ENCODE measurements at regions of chr11 and their contacts with region 1.

Region 1: DNA sequence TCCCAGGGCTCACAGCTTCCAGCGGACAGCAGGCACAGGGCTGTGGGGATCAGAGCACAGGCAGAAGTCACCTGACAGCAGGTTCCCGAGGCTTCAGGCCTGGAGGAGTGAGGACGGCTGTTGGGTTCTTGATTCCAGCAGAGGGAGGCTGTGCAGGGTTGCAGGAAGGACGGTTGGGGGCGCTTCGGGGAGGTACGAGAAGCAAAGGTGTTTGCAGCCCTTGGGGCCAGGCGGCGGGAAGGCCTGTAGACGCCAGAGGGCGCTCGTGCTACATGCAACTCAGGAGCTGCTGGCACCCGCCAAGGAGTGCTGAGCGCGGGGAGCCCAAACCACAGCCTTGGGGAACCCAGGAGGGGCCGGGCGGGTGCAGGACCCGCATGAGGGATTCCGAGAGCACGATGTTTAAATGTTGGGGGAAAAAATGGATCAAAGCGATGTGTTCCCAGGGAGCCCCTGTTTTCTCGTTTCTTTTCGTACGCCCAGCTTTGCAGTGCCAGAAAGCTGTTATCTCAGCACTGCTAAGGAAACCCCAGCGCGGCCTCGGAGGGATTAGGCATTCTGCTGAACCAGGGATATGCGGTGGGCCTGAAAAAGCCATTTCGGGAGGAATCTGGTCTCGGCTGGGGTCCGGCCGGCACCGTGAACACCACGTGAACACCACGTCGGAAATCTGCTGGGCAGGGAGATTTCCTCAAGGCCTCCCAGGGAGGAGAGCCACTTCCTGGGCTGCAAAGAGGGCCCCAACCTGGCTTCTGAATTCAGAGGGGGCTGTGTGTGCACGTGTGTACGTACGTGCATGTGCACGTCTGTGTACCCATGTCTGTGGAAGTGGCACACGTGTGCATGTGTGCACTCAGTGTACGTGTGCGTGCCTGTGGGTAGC is 88.1 kb downstream of the KCNQ1 start:
- DNase-seq: peak; percentile 84 to 96
- ATAC-seq: peak; percentile 69

Region 2: GRCh38 chr11:2428322-2428795 is 104.6 kb before region 1 on chr11:
- intact Hi-C with region 1: loop called (anchors 5 kb)
- DNase-seq: peak; percentile 69 to 93
- ATAC-seq: peak; percentile 73

Region 3: GRCh38 chr11:2498750-2499149 is 34.2 kb before region 1 on chr11:
- intact Hi-C with region 1: no loop called
- DNase-seq: no peak
- ATAC-seq: no peak

Region 4: DNA sequence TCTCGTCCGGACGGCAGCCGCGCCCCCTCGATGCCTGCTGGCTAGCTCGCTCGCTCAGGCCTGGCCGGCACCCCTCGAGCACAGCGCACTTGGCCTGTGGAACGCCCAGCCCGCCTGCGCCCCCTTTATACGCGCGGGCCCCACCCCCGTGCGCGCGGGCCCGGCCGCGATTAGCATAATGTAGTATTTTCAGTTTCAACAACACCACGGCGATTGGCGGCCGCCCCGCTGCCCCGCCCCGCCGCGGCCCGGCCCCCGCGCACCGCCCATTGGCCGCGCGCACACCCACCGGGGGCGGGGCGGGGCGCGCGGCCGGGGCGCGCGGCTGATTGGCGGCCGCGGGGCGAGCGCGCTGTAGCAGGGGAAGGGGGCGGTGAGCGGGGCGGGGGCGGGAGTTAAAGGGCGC is 352.7 kb after region 1 on chr11 and contains the start of gene CDKN1C:
- intact Hi-C with region 1: loop called (anchors 2 to 5 kb)
- DNase-seq: peak; percentile 86 to 88
- ATAC-seq: peak; percentile 74
- total RNA-seq, gene CDKN1C: 5.8 to 10.6 TPM

Region 5: DNA sequence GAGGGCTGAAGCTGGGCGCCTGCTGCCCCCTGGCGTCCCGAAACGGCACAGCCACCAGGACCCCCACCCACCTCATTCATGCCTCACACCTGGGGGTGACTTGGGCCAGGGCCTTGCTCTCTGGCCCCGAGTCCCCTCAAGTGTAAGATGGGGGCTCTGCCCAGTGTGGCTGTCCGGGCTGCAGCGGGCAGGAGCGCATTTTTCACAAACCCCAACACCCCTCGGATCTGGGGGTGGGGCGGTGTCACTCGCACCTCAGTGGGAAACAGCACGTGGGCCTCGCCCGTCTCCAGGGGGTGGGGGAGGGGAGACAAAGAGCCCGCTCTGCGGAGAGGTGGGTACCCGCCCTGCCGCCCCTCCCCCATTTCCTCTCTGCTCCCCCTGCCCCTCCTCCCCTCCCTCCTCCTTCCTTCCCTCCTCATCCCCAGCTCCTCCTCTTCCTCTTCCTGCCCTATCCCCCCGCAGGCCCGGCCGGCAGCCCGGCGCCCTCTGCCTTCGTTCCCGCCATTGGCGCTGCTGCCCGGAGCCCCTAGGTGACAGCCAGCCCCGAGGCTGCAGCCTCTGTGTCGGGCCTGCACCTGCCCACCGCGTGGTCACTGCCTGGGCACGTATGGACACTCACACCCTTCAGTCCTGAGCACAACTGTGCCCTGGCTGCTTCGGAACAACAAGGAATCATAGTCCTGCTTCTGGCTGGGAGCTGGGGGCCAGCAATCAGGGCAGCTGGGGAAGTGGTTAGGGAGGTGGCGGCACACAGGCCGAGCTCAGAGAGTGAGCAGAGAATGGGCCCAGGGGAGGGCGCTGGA is 359.5 kb after region 1 on chr11:
- intact Hi-C with region 1: loop called (anchors 2 to 5 kb)
- DNase-seq: peak; percentile 55 to 68
- ATAC-seq: peak; percentile 41

Measured in left colon (tissue), 2 donors.